Endothelial cell of umbilical vein (primary cell): ENCODE measurements at regions of chrX and their contacts with region 1.

Region 1: DNA sequence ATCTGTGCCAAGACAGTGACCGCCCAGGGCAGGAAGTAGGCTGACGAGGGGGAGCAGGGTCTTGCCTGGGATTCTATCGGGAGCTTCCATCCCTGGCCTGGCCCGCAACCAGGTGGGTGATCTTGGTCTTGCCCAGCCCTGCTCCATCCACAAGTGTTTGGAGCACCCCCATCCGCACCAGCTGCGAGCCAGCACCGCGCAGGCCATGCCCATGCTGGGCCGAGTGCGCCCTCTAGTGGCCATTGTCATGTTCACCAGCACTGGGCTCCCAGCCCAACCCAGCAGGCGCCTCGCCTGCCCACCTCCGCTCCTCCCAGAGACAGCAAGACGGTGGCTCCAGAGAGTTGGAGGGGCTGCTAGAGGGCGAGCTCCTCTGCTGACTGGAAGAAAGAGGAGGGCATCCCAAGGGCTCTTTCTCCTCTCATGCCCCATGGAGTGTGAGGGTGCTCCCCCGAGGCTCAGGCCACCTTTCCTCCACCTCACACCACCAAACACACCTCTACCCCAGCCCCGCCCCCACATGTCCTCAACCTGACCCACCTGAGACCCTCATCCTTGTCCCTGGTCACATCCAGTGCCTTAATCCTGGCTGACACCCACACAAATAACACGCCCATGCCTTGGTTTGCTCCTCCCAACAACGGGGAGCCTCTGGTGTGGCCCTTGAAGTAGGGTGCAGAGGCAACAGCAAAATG is 9.8 kb upstream of the ATP2B3 start:
- DNase-seq: peak; percentile 68
- H3K4me3 ChIP-seq: no peak overlapping the region
- H3K27ac ChIP-seq: no peak overlapping the region
- H3K4me1 ChIP-seq: no peaks in the 10 kb centered on the region
- H3K27me3 ChIP-seq: no peaks in the 10 kb centered on the region
- CTCF ChIP-seq: peak; percentile 65 to 80
- POLR2A ChIP-seq: no peak

Region 2: DNA sequence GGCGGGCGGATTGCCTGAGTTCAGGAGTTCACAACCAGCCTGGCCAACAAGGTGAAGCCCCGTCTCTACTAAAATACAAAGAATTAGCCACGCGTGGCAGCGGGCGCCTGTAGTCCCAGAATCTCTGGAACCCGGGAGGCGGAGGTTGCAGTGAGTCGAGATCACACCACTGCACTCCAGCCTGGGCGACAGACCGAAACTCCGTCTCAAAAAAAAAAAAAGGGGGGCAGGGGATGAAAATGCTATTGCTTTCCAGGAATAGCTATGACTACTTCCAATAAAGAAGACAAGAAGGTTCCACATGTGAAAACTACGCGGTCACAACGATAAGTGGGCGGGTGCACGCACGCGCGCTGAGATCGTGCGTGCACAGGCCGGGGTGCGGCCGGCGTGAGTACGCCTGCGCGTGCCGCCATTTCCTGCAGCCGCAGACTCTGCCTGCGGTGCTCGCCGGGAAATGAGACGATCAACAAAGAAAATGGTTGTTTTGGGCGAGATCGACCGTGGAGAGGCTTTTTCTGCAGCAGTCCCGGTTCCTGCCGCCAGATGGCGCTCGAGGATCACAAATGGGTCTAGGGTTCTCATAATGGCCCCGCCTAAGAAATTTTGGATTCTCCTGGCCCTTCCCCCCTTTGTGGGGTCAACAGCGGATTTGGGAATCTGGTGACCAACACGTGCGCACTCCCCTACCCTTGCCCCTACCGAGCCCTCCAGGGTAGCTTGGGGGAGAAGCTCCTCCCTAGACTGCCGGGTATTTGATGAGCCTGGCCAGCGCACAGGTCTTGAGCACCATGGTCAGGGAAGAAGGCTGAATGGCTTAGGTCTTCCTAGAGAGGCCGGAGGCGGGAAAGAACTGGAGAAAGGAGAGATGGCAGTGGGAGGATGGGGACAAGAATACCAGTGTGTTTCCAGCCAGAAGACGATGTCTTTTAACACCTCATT is 548.8 kb before region 1 on chrX:
- CTCF ChIA-PET with region 1: no interaction called
- POLR2A ChIA-PET with region 1: no interaction called
- dilution Hi-C with region 1: no loop called
- intact Hi-C with region 1: loop called (anchors 1 kb)
- DNase-seq: peak; percentile 89
- H3K4me3 ChIP-seq: peak overlapping the region in 1 of 3 experiments; percentile 9
- H3K27ac ChIP-seq: peak overlapping the region; percentile 9
- H3K4me1 ChIP-seq: no peaks in the 10 kb centered on the region
- H3K27me3 ChIP-seq: no peaks in the 10 kb centered on the region
- CTCF ChIP-seq: peak; percentile 70 to 71
- POLR2A ChIP-seq: peak; percentile 60

Region 3: GRCh38 chrX:153460845-153461244 is 46.8 kb before region 1 on chrX:
- CTCF ChIA-PET with region 1: interaction called, 55 read pairs
- POLR2A ChIA-PET with region 1: interaction called, 3 read pairs
- dilution Hi-C with region 1: no loop called
- intact Hi-C with region 1: loop called (anchors 1 kb)
- DNase-seq: peak; percentile 47
- H3K4me3 ChIP-seq: no peak overlapping the region
- H3K27ac ChIP-seq: peak overlapping the region; percentile 58
- H3K4me1 ChIP-seq: peaks cover 5% of the 10 kb centered on the region
- H3K27me3 ChIP-seq: no peaks in the 10 kb centered on the region
- CTCF ChIP-seq: peak; percentile 60 to 65
- POLR2A ChIP-seq: no peak

Region 4: GRCh38 chrX:153476647-153477362 is 30.8 kb before region 1 on chrX:
- CTCF ChIA-PET with region 1: interaction called, 146 read pairs
- POLR2A ChIA-PET with region 1: no interaction called
- dilution Hi-C with region 1: no loop called
- intact Hi-C with region 1: no loop called
- DNase-seq: peak; percentile 87
- H3K4me3 ChIP-seq: no peak overlapping the region
- H3K27ac ChIP-seq: peak overlapping the region; percentile 73
- H3K4me1 ChIP-seq: peaks cover 28% of the 10 kb centered on the region
- H3K27me3 ChIP-seq: no peaks in the 10 kb centered on the region
- CTCF ChIP-seq: no peak
- POLR2A ChIP-seq: no peak

Region 5: DNA sequence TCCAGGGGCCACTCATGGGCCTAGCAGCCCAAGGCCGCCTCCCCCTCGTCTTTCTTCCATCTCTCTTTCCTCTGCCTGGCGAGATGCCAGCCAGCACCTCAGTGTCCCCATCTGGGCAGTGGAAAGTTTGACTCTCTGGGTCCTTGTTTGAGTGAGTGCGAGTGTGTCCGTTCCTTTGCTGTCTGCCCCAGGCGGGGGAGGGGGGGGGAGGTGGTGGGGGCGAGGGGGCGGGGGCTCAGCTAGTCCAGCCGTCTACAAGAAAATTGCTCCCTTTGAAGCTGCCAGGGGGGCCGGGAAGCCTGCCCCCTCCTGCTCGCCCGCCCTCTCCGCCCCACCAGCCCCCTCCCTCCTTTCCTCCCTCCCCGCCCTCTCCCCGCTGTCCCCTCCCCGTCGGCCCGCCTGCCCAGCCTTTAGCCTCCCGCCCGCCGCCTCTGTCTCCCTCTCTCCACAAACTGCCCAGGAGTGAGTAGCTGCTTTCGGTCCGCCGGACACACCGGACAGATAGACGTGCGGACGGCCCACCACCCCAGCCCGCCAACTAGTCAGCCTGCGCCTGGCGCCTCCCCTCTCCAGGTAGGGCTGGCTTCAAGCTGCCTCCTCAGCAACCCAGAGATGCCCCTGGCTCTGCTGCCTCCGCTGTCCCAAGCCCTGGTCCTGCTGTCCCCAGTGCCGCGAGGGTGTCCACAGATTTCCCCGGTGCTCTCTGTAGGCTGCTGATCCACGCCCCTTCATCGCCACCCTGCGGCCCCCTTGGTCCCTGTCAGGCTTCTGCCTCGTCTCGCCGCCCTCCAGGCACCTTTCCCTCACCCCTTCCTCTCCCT is 12.9 kb before region 1 on chrX and contains the start of gene BGN:
- CTCF ChIA-PET with region 1: interaction called, 14 read pairs
- POLR2A ChIA-PET with region 1: interaction called, 12 read pairs
- dilution Hi-C with region 1: no loop called
- intact Hi-C with region 1: no loop called
- DNase-seq: peak; percentile 81
- H3K4me3 ChIP-seq: peak within 1 kb of the TSS; percentile 10 to 78 (median 65)
- H3K27ac ChIP-seq: peak within 1 kb of the TSS; percentile 80
- H3K4me1 ChIP-seq: peaks cover 34% of the 10 kb centered on the region
- H3K27me3 ChIP-seq: no peaks in the 10 kb centered on the region
- CTCF ChIP-seq: peak; percentile 30 to 48
- POLR2A ChIP-seq: peak; percentile 75
- total RNA-seq, gene BGN: 453 and 479 TPM in 2 replicates